ENCODE measurements at regions of chr3 and their contacts with region 1.

Region 1: GRCh38 chr3:56801662-56802377 is at the start of gene ARHGEF3:
- DNase-seq: peak; percentile 95
- ATAC-seq: peak; percentile 92
- H3K4me3 ChIP-seq: peak within 1 kb of the TSS; percentile 66 to 96 (median 72)
- H3K4me3 Mint-ChIP-seq: peak within 1 kb of the TSS; percentile 92
- H3K27ac ChIP-seq: peak within 1 kb of the TSS; percentile 35 to 53
- H3K27ac Mint-ChIP-seq: peak within 1 kb of the TSS; percentile 87
- H3K4me1 ChIP-seq: peaks cover 38 to 39% of the 10 kb centered on the region in 2 donors
- H3K4me1 Mint-ChIP-seq: peaks cover 48% of the 10 kb centered on the region
- H3K27me3 ChIP-seq: no peaks in the 10 kb centered on the region
- H3K27me3 Mint-ChIP-seq: no peaks in the 10 kb centered on the region
- CTCF ChIP-seq: peak; percentile 75
- total RNA-seq, gene ARHGEF3: 30.8 and 34.6 TPM in 2 replicates

Region 2: GRCh38 chr3:56702490-56703315 is 99.1 kb before region 1 on chr3:
- CTCF ChIA-PET with region 1: interaction called, 420 read pairs
- POLR2A ChIA-PET with region 1: interaction called, 21 read pairs
- intact Hi-C with region 1: loop called (anchors 1 kb)
- DNase-seq: peak; percentile 81
- ATAC-seq: peak; percentile 64
- H3K4me3 ChIP-seq: no peak overlapping the region
- H3K4me3 Mint-ChIP-seq: no peak overlapping the region
- H3K27ac ChIP-seq: no peak overlapping the region
- H3K27ac Mint-ChIP-seq: no peak overlapping the region
- H3K4me1 ChIP-seq: peaks cover 0 to 4% of the 10 kb centered on the region in 2 donors
- H3K4me1 Mint-ChIP-seq: peaks cover 3% of the 10 kb centered on the region
- H3K27me3 ChIP-seq: no peaks in the 10 kb centered on the region
- H3K27me3 Mint-ChIP-seq: no peaks in the 10 kb centered on the region
- CTCF ChIP-seq: peak; percentile 93

Region 3: DNA sequence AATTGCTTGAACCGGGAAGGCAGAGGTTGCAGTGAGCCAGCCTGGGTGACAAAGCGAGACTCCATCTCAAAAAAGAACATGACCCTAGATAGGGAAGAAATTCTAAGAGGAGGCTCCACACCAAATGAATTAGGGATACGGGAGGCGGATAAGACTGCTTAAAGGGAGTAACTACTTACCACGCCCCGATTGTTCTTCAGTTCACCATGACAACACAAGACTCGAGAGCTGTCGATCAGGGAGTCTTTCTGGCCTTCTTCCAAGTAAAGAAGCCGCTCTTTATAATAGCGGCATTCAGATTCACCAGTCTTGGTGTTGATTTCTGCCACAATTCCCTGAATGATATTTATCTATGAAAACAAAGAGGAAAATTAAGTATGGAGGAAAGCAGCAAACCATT is 64.8 kb before region 1 on chr3:
- CTCF ChIA-PET with region 1: interaction called, 61 read pairs
- POLR2A ChIA-PET with region 1: interaction called, 5 read pairs
- intact Hi-C with region 1: no loop called
- DNase-seq: no peak
- ATAC-seq: no peak
- H3K4me3 ChIP-seq: no peak overlapping the region
- H3K4me3 Mint-ChIP-seq: no peak overlapping the region
- H3K27ac ChIP-seq: no peak overlapping the region
- H3K27ac Mint-ChIP-seq: no peak overlapping the region
- H3K4me1 ChIP-seq: no peaks in the 10 kb centered on the region
- H3K4me1 Mint-ChIP-seq: no peaks in the 10 kb centered on the region
- H3K27me3 ChIP-seq: no peaks in the 10 kb centered on the region
- H3K27me3 Mint-ChIP-seq: no peaks in the 10 kb centered on the region
- CTCF ChIP-seq: no peak

Region 4: DNA sequence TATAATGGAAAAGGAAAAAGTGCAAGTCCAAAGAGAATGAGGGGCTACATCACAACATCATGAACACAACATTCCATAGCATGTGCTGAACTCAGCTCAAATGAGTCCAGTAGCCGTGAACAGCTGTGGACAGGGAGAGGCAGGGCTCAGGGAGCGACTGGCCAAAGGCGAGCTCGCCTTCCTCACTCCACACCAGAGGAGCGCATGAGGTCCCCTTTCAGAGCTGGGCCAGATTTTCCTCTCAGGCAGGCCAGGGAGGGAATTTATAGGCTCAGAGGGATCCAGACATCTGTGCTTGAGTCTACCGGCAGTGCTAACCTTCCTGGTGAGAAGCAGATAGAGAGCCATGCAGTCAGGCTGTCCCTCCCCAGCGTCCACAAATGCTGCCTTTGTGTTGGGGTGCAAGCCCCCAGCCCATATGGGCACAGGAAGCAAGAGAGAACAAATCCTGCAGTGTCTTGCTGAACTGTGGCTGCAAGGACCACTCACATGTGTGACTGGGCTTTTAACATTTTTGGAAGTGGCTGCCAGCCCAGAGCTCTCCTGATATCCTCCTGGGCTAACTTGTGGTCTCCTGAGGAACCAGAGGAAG is 32.6 kb before region 1 on chr3:
- CTCF ChIA-PET with region 1: interaction called, 18 read pairs
- POLR2A ChIA-PET with region 1: interaction called, 4 read pairs
- intact Hi-C with region 1: no loop called
- DNase-seq: no peak
- ATAC-seq: no peak
- H3K4me3 ChIP-seq: no peak overlapping the region
- H3K4me3 Mint-ChIP-seq: no peak overlapping the region
- H3K27ac ChIP-seq: no peak overlapping the region
- H3K27ac Mint-ChIP-seq: no peak overlapping the region
- H3K4me1 ChIP-seq: no peaks in the 10 kb centered on the region
- H3K4me1 Mint-ChIP-seq: peaks cover 8% of the 10 kb centered on the region
- H3K27me3 ChIP-seq: no peaks in the 10 kb centered on the region
- H3K27me3 Mint-ChIP-seq: no peaks in the 10 kb centered on the region
- CTCF ChIP-seq: no peak

Region 5: DNA sequence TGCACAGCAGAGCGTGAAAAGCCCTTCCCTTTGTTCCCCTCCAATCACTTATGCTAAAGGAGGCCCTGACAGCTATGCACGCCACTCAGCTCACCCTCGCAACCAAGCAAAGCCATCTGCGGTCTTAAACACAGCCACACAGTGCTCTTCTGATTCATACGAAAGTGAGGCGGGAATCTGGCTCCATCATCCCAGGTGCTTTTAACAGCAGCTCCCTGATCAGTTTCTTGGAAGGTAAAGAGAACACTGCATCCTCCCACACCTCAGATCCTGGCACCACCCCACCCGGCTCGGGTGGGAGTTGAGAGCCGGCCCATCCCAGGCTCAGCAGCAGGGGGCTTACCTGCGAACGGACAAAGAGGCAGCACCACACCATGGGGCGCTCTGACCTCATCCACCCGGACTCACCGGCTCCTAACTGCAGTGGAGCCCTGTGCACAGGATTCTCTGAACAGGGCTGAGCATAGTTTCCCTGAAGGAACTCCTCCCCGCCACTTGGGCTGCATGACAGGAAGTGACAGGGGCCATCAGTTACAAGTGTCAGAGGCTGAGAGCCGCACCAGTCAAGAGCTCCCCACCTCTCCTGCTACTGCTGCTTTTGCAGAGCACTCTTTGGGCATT is 114.3 kb after region 1 on chr3:
- CTCF ChIA-PET with region 1: interaction called, 8 read pairs
- POLR2A ChIA-PET with region 1: interaction called, 6 read pairs
- intact Hi-C with region 1: loop called (anchors 1 kb)
- DNase-seq: peak; percentile 70
- ATAC-seq: peak; percentile 69
- H3K4me3 ChIP-seq: peak overlapping the region; percentile 25 to 79 (median 57)
- H3K4me3 Mint-ChIP-seq: peak overlapping the region; percentile 85
- H3K27ac ChIP-seq: peak overlapping the region; percentile 69 to 85
- H3K27ac Mint-ChIP-seq: peak overlapping the region; percentile 70
- H3K4me1 ChIP-seq: peaks cover 43 to 44% of the 10 kb centered on the region in 2 donors
- H3K4me1 Mint-ChIP-seq: peaks cover 58% of the 10 kb centered on the region
- H3K27me3 ChIP-seq: no peaks in the 10 kb centered on the region
- H3K27me3 Mint-ChIP-seq: no peaks in the 10 kb centered on the region
- CTCF ChIP-seq: no peak

Region 6: DNA sequence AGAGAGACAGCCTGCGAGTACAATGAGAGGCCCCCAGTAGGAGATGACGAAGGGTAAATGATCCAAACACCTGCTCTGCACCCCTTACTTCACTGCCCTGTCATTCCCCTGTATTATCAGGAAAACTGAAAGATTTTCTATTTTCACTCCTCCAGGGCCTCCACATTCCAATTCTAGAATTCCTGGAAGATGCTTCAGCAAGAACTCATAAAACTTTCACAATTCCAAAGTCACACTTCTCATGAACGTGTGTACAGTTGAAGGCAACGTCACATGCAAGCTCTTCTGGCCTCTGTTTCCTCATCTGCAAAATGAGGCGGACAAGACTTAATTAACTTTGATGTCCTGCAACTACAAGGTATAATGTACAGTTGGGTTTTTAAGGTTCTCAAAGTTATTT is 195.9 kb after region 1 on chr3:
- CTCF ChIA-PET with region 1: interaction called, 205 read pairs
- POLR2A ChIA-PET with region 1: no interaction called
- intact Hi-C with region 1: no loop called
- DNase-seq: no peak
- ATAC-seq: no peak
- H3K4me3 ChIP-seq: no peak overlapping the region
- H3K4me3 Mint-ChIP-seq: no peak overlapping the region
- H3K27ac ChIP-seq: no peak overlapping the region
- H3K27ac Mint-ChIP-seq: no peak overlapping the region
- H3K4me1 ChIP-seq: no peaks in the 10 kb centered on the region
- H3K4me1 Mint-ChIP-seq: peaks cover 3% of the 10 kb centered on the region
- H3K27me3 ChIP-seq: peaks cover 0 to 5% (median 0%) of the 10 kb centered on the region in 4 experiments
- H3K27me3 Mint-ChIP-seq: peaks cover 7% of the 10 kb centered on the region
- CTCF ChIP-seq: no peak

Measured in B cell (primary cell).